ENCODE measurements at regions of chr4 and their contacts with region 1.

Region 1: DNA sequence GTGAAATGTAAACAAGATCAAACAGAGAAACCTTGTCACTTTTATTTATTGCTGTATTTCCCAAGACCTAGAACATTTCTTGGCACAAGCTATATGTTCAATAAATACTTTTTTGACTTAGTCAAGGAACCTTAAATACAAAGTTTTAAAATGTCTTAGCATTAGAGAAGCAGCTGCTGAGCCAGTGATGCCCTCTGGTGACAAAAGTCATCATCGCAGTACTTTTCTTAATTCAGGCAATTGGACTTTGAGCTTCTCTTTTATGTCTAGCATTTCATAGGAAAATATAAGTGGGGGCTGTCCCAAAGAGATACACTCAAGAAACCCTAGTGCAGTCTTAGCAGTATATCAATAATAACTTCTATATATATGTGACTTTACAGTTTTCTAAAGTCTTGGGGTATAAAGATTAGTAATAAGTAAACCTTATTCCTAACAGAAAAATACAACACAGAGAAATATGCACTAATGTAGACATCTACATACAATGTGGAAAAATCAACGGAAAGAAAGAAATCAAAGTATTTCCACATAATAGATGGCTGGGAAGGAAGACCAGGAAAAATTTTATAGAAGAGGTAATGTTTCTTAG is 118.4 kb downstream of the DTHD1 start:
- DNase-seq: no peak
- H3K4me3 ChIP-seq: no peak overlapping the region; a peak in 1 of 4 replicates
- H3K27ac ChIP-seq: no peak overlapping the region
- H3K4me1 ChIP-seq: no peaks in the 10 kb centered on the region
- H3K27me3 ChIP-seq: no peaks in the 10 kb centered on the region
- CTCF ChIP-seq: peak; percentile 68
- EP300 ChIP-seq: no peak
- RAD21 ChIP-seq: peak; percentile 45

Region 2: GRCh38 chr4:36351082-36351666 is 48.7 kb before region 1 on chr4:
- CTCF ChIA-PET with region 1: interaction called, 12 read pairs
- POLR2A ChIA-PET with region 1: no interaction called
- DNase-seq: peak; percentile 18
- H3K4me3 ChIP-seq: no peak overlapping the region; a peak in 1 of 4 replicates
- H3K27ac ChIP-seq: no peak overlapping the region
- H3K4me1 ChIP-seq: no peaks in the 10 kb centered on the region
- H3K27me3 ChIP-seq: no peaks in the 10 kb centered on the region
- CTCF ChIP-seq: peak; percentile 80
- EP300 ChIP-seq: no peak
- RAD21 ChIP-seq: peak; percentile 68

Measured in SK-N-SH (cell line).